ENCODE measurements at regions of chr10 and their contacts with region 1.

Region 1: DNA sequence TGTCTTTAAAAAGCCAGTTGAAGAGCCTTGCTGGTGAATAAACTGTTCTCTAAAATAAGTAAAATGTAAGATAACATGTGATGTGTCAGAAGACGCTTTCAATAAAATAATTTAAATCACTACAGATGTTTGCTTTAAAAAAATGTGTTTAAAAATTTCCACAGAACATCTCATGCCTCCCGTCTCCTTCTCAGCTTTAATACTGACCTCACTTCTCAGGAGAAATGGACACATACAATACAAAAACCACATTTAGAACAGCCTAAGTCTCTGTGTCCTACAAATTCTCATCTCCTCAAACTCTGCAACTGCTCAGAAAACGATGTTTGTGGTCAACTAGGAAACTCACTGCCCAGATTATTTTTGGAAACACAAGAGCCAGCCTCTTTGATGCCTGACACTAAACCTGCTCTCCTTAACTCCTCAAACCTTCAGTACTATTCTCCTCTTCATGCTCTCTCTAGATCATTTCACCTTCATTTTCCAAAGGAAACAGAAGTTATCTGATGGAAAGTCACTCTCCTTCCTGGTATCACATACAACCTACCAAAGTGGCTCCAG is 120.3 kb downstream of the ZNF438 start:
- DNase-seq: no peak
- ATAC-seq: no peak
- H3K4me3 ChIP-seq: no peak overlapping the region
- H3K27ac ChIP-seq: no peak overlapping the region
- H3K4me1 ChIP-seq: peaks cover 0 to 6% of the 10 kb centered on the region in 2 donors
- H3K27me3 ChIP-seq: no peaks in the 10 kb centered on the region
- CTCF ChIP-seq: no peak

Region 2: DNA sequence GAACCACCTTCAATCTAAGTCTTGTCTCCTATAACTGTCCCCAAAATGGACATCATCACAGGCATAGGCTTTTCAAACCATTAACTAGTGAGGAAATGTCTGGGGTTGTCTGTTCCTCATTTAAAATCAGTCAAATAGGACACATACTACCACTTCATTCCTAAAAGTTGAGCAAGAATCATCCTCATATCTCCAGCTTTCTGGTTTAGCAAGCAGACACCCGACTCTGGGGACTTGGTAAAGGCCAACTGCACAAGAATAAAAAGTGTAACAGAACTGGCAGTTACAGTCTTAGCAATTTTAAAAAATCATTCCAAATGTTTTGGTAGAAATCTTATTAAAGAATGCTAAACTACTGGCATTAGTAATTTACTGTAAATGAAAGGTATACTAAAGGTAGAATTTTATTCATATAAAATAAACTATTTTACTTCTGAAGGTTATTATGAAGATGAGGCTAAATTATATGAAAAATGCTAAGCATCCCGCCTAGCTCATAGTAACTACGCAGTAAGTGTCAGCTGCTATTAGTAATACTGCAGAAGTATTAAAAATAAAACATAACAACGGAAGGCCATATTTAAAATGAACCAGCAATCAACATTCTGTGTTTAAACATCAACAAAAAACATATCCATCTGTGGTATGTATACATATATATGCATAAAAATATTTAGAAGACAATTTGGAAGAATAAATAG is 59.5 kb after region 1 on chr10:
- intact Hi-C with region 1: no loop called
- DNase-seq: no peak
- ATAC-seq: no peak
- H3K4me3 ChIP-seq: no peak overlapping the region
- H3K27ac ChIP-seq: no peak overlapping the region
- H3K4me1 ChIP-seq: peaks cover 4 to 40% of the 10 kb centered on the region in 2 donors
- H3K27me3 ChIP-seq: no peaks in the 10 kb centered on the region
- CTCF ChIP-seq: no peak

Region 3: DNA sequence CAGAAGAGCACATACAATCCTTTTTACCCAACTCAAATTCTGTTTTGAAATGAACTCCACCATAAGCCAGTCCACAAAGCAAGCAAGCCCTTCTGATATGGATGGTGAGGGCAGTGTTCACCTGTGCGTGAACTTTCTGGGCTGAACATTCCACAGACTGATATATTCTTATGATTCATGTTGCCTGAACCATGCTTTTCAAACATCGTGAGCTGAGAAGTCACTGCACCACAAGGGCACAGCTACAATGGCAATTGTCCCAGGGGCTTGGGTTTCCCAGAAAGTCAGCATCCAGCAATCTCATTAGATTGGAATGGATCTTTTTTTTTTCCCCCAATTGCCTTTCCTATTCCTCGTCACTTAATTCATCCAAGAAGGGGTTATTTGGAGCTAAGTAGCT is 207.2 kb after region 1 on chr10:
- intact Hi-C with region 1: loop called in 1 of 2 experiments (anchors 5 kb)
- DNase-seq: no peak
- ATAC-seq: no peak
- H3K4me3 ChIP-seq: no peak overlapping the region
- H3K27ac ChIP-seq: no peak overlapping the region
- H3K4me1 ChIP-seq: no peaks in the 10 kb centered on the region
- H3K27me3 ChIP-seq: no peaks in the 10 kb centered on the region
- CTCF ChIP-seq: no peak

Region 4: DNA sequence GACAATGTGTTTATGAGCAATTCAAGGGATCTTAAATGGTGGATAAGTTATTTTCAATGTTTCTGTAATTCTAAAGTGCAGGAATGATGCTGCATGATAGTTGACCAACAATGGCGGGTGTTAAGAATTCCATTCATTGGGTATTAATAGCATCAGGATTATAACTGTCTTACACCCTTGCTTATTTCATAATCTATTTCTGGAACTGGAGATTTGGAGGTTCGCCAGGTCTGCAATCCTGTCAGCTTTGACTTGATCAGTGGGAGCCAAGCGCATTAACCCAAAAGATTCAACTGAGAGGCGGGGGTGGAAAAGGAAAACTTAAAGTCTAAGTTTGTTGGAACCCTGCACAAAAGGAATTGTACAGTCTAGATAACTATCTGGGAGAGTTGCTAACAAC is 292.7 kb after region 1 on chr10:
- intact Hi-C with region 1: no loop called
- DNase-seq: peak in 2 of 4 donors; percentile 53 to 65
- ATAC-seq: no peak
- H3K4me3 ChIP-seq: no peak overlapping the region
- H3K27ac ChIP-seq: no peak overlapping the region
- H3K4me1 ChIP-seq: no peaks in the 10 kb centered on the region
- H3K27me3 ChIP-seq: no peaks in the 10 kb centered on the region
- CTCF ChIP-seq: no peak

Measured in left lung (tissue), 14 donors.